ENCODE measurements at regions of chr3 and their contacts with region 1.

Region 1: GRCh38 chr3:12841149-12841970 is at the start of gene RPL32:
- DNase-seq: peak; percentile 81 to 86
- H3K4me3 ChIP-seq: peak within 1 kb of the TSS; percentile 88 to 100 (median 94)
- H3K27ac ChIP-seq: peak within 1 kb of the TSS; percentile 93
- H3K4me1 ChIP-seq: peaks cover 5 to 14% (median 10%) of the 10 kb centered on the region in 4 experiments
- H3K27me3 ChIP-seq: no peaks in the 10 kb centered on the region
- CTCF ChIP-seq: peak in 2 of 3 experiments; percentile 68 to 84; a peak in 3 of 4 replicates
- EP300 ChIP-seq: no peak
- POLR2A ChIP-seq: peak; percentile 95 to 97
- RAD21 ChIP-seq: peak in 1 of 2 experiments; percentile 26; a peak in 1 of 4 replicates
- total RNA-seq, gene RPL32: 1,954 and 2,043 TPM in 2 replicates

Region 2: GRCh38 chr3:12719984-12720898 is 121.1 kb before region 1 on chr3:
- CTCF ChIA-PET with region 1: no interaction called
- POLR2A ChIA-PET with region 1: no interaction called
- DNase-seq: peak; percentile 27 to 76
- H3K4me3 ChIP-seq: no peak overlapping the region
- H3K27ac ChIP-seq: no peak overlapping the region
- H3K4me1 ChIP-seq: no peaks in the 10 kb centered on the region
- H3K27me3 ChIP-seq: no peaks in the 10 kb centered on the region; a peak in 1 of 7 replicates
- CTCF ChIP-seq: peak; percentile 66 to 98 (median 84)
- EP300 ChIP-seq: no peak
- POLR2A ChIP-seq: no peak
- RAD21 ChIP-seq: peak; percentile 76 to 83

Region 3: GRCh38 chr3:12782172-12782815 is 59.1 kb before region 1 on chr3:
- CTCF ChIA-PET with region 1: interaction called, 9 read pairs
- POLR2A ChIA-PET with region 1: interaction called, 10 read pairs
- DNase-seq: no peak
- H3K4me3 ChIP-seq: no peak overlapping the region
- H3K27ac ChIP-seq: no peak overlapping the region
- H3K4me1 ChIP-seq: peaks cover 0 to 4% (median 1%) of the 10 kb centered on the region in 4 experiments; a peak in 2 of 7 replicates
- H3K27me3 ChIP-seq: no peaks in the 10 kb centered on the region
- CTCF ChIP-seq: no peak
- EP300 ChIP-seq: no peak
- POLR2A ChIP-seq: 0 out of 3 replicates have a peak, but pooled peaks of 1 of the 2 experiments have one; percentile 26
- RAD21 ChIP-seq: no peak

Region 4: GRCh38 chr3:12810013-12810780 is 31.2 kb before region 1 on chr3:
- CTCF ChIA-PET with region 1: interaction called, 7 read pairs
- POLR2A ChIA-PET with region 1: interaction called, 661 read pairs
- DNase-seq: peak; percentile 90 to 99
- H3K4me3 ChIP-seq: peak overlapping the region; percentile 38 to 64 (median 60)
- H3K27ac ChIP-seq: no peak overlapping the region
- H3K4me1 ChIP-seq: peaks cover 0 to 8% (median 4%) of the 10 kb centered on the region in 4 experiments; a peak in 4 of 7 replicates
- H3K27me3 ChIP-seq: no peaks in the 10 kb centered on the region
- CTCF ChIP-seq: peak in 2 of 3 experiments; percentile 60 to 70; a peak in 3 of 4 replicates
- EP300 ChIP-seq: no peak
- POLR2A ChIP-seq: peak in 1 of 2 experiments; percentile 55; a peak in 1 of 3 replicates
- RAD21 ChIP-seq: peak; percentile 38 to 47; a peak in 3 of 4 replicates

Region 5: GRCh38 chr3:12853191-12853741 is 11.9 kb after region 1 on chr3:
- CTCF ChIA-PET with region 1: interaction called, 23 read pairs
- POLR2A ChIA-PET with region 1: interaction called, 314 read pairs
- DNase-seq: no peak
- H3K4me3 ChIP-seq: no peak overlapping the region
- H3K27ac ChIP-seq: no peak overlapping the region
- H3K4me1 ChIP-seq: peaks cover 0 to 3% (median 0%) of the 10 kb centered on the region in 4 experiments; a peak in 2 of 7 replicates
- H3K27me3 ChIP-seq: peaks cover 0 to 2% (median 0%) of the 10 kb centered on the region in 4 experiments; a peak in 1 of 7 replicates
- CTCF ChIP-seq: no peak
- EP300 ChIP-seq: no peak
- POLR2A ChIP-seq: no peak
- RAD21 ChIP-seq: no peak

Region 6: DNA sequence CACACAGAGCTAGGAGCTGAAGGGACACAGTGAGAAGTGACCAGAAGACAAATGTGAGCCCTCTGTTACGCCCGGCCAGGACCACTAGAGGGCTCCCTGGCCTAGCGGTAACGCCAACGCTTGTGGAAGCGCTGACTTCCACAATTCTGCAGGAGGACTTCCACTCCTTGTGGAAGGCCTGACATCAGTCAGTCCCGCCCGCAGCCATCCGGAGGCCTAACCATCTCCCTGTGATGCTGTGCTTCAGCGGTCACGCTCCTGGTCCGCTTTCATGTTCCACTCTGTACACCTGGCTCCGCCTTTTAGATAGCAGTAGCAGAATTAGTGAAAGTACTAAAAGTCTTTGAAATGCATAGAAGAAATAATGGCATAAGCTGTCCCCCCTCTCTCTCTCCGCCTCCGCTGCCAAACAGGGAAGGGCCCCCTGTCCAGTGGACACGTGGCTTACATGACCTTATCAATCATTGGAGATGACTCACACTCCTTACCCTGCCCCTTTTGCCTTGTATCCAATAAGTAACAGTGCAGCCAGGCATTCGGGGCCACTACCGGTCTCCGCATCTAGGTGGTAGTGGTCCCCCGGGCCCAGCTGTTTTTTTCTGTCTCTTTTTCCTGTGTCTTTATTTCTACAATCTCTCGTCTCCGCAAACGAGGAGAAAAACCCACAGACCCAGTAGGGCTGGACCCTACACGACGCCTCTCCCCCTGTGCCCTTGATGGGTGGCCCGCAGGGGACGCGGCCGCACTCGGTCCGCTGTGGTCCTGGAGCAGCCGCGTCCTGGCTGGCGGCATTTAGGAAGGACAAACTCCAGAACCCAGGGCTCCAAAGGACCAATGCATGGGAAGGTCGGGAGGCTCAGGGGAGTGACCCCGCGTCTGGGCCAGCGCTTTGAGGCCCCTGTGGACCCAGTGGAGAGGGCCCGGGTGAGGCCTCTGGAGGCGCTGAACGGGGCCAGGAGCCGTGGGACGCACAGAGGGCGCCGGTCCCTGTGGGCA is 27.0 kb after region 1 on chr3:
- CTCF ChIA-PET with region 1: interaction called, 16 read pairs
- POLR2A ChIA-PET with region 1: interaction called, 314 read pairs
- DNase-seq: peak; percentile 38 to 80
- H3K4me3 ChIP-seq: peak overlapping the region; percentile 46 to 79 (median 70)
- H3K27ac ChIP-seq: no peak overlapping the region
- H3K4me1 ChIP-seq: peaks cover 0 to 2% (median 2%) of the 10 kb centered on the region in 4 experiments; a peak in 3 of 7 replicates
- H3K27me3 ChIP-seq: peaks cover 0 to 5% (median 0%) of the 10 kb centered on the region in 4 experiments; a peak in 3 of 7 replicates
- CTCF ChIP-seq: peak; percentile 89 to 94 (median 93)
- EP300 ChIP-seq: no peak
- POLR2A ChIP-seq: no peak
- RAD21 ChIP-seq: peak; percentile 84 to 88

Measured in H1 (cell line).